BJ (cell line): ENCODE measurements at regions of chr9 and their contacts with region 1.

Region 1: GRCh38 chr9:76704593-76705204 is 59.5 kb upstream of the PCA3 start:
- DNase-seq: peak; percentile 49
- H3K4me3 ChIP-seq: no peak overlapping the region
- H3K27me3 ChIP-seq: no peaks in the 10 kb centered on the region; the same call in 1 of the 2 replicates
- CTCF ChIP-seq: peak; percentile 48; the same call in 1 of the 2 replicates

Region 2: GRCh38 chr9:76393963-76394679 is 310.6 kb before region 1 on chr9 and contains the start of gene RFK:
- CTCF ChIA-PET with region 1: interaction called, 11 read pairs
- POLR2A ChIA-PET with region 1: no interaction called
- DNase-seq: peak; percentile 63
- H3K4me3 ChIP-seq: peak within 1 kb of the TSS; percentile 98
- H3K27me3 ChIP-seq: no peaks in the 10 kb centered on the region
- CTCF ChIP-seq: peak; percentile 40
- polyA plus RNA-seq, gene RFK: 7.5 and 15.4 TPM in 2 replicates

Region 3: GRCh38 chr9:76403352-76403751 is 301.3 kb before region 1 on chr9:
- CTCF ChIA-PET with region 1: interaction called, 17 read pairs
- POLR2A ChIA-PET with region 1: no interaction called
- DNase-seq: peak; percentile 47
- H3K4me3 ChIP-seq: no peak overlapping the region
- H3K27me3 ChIP-seq: no peaks in the 10 kb centered on the region
- CTCF ChIP-seq: peak; percentile 59

Region 4: DNA sequence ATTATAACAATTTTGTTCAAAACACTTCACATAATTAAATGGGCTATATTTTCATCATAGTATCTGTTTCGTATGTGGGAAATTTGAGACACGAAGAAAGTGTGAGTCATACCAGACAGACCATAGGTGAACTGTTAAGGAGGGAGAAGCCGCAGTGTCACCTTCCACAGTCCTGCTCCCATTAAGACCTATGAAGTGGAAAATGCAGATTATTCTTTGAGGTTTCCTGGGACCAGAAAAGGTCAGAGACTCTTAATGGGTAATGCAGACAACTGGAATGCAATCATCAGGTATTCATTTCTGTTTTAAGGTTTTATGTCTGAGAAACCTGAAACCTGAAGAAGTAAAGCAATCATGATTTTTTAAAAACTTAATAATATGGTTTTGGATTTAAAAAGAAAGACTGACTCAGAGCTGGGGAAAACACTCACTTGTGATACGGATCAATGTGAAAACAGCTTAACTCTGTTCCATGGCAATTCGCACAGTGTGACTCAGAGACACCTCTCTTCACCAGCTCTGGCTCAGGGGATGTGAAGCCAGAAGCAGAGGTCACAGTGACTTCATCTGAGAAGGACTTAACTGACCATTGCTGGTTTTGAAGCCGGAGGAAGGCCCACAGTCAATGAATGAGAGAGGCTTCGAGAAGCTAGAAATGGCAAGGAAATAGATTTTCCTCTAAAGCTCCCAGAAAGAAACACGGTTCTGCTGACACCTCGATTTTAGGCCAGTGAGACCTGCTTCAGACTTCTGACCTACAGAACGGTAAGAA is 263.0 kb before region 1 on chr9:
- CTCF ChIA-PET with region 1: interaction called, 43 read pairs
- POLR2A ChIA-PET with region 1: no interaction called
- DNase-seq: no peak
- H3K4me3 ChIP-seq: no peak overlapping the region
- H3K27me3 ChIP-seq: peaks cover 1% of the 10 kb centered on the region; the same call in 1 of the 2 replicates
- CTCF ChIP-seq: no peak

Region 5: GRCh38 chr9:76557674-76558225 is 146.9 kb before region 1 on chr9:
- CTCF ChIA-PET with region 1: no interaction called
- POLR2A ChIA-PET with region 1: no interaction called
- DNase-seq: peak; percentile 46
- H3K4me3 ChIP-seq: no peak overlapping the region
- H3K27me3 ChIP-seq: no peaks in the 10 kb centered on the region
- CTCF ChIP-seq: no peak

Region 6: GRCh38 chr9:76624391-76625048 is 80.2 kb before region 1 on chr9:
- CTCF ChIA-PET with region 1: no interaction called
- POLR2A ChIA-PET with region 1: no interaction called
- DNase-seq: no peak
- H3K4me3 ChIP-seq: no peak overlapping the region
- H3K27me3 ChIP-seq: no peaks in the 10 kb centered on the region
- CTCF ChIP-seq: no peak

Region 7: GRCh38 chr9:76658535-76659231 is 46.0 kb before region 1 on chr9:
- CTCF ChIA-PET with region 1: interaction called, 86 read pairs
- POLR2A ChIA-PET with region 1: no interaction called
- DNase-seq: no peak
- H3K4me3 ChIP-seq: no peak overlapping the region
- H3K27me3 ChIP-seq: peaks cover 1% of the 10 kb centered on the region; the same call in 1 of the 2 replicates
- CTCF ChIP-seq: peak; percentile 62